H1 (cell line): ENCODE measurements at regions of chr10 and their contacts with region 1.

Region 1: DNA sequence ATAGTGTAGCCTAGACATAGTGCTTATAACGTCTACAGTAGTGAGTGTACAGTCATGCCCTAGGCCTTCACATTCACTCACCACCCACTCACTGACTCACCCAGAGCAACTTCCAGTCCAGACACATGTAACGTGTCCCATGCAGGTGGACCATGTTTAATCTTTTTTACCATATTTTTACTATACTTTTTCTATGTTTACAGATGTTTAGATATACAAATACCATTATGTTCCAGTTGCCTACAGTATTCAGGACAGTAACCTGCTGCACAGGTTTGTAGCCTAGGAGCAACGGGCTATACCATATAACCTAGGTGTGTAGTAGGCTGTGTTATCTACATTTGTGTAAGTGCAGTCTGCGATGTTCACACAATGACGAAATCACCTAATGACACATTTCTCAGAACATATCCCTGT is 11.0 kb downstream of the MPP7 start:
- DNase-seq: no peak
- H3K4me3 ChIP-seq: no peak overlapping the region
- H3K27ac ChIP-seq: no peak overlapping the region
- H3K4me1 ChIP-seq: peaks cover 0 to 5% (median 1%) of the 10 kb centered on the region in 4 experiments; a peak in 2 of 7 replicates
- H3K27me3 ChIP-seq: peaks cover 0 to 1% (median 0%) of the 10 kb centered on the region in 4 experiments; a peak in 1 of 7 replicates
- CTCF ChIP-seq: no peak
- EP300 ChIP-seq: no peak
- POLR2A ChIP-seq: no peak
- RAD21 ChIP-seq: no peak

Region 2: GRCh38 chr10:28302638-28303488 is 11.0 kb after region 1 on chr10 and contains the start of gene MPP7:
- CTCF ChIA-PET with region 1: interaction called, 11 read pairs
- POLR2A ChIA-PET with region 1: interaction called, 8 read pairs
- DNase-seq: peak; percentile 90 to 93
- H3K4me3 ChIP-seq: peak within 1 kb of the TSS; percentile 66 to 71 (median 70)
- H3K27ac ChIP-seq: peak within 1 kb of the TSS; percentile 80; the same call in 1 of the 2 replicates
- H3K4me1 ChIP-seq: peaks cover 0 to 3% (median under 1%) of the 10 kb centered on the region in 4 experiments; a peak in 3 of 7 replicates
- H3K27me3 ChIP-seq: peaks cover 0 to 1% (median 0%) of the 10 kb centered on the region in 4 experiments; a peak in 2 of 7 replicates
- CTCF ChIP-seq: peak in 2 of 3 experiments; percentile 36 to 37; a peak in 3 of 4 replicates
- EP300 ChIP-seq: 0 out of 3 replicates have a peak, but pooled peaks of 1 of the 2 experiments have one; percentile 4
- POLR2A ChIP-seq: peak in 1 of 2 experiments; percentile 89; a peak in 2 of 3 replicates
- RAD21 ChIP-seq: peak; percentile 36 to 52; a peak in 3 of 4 replicates
- total RNA-seq, gene MPP7: 9.3 and 9.8 TPM in 2 replicates